ENCODE measurements at regions of chr19 and their contacts with region 1.

Region 1: GRCh38 chr19:48588670-48589399 is 17.7 kb upstream of the SPACA4 start:
- DNase-seq: peak; percentile 91
- CTCF ChIP-seq: peak; percentile 98

Region 2: DNA sequence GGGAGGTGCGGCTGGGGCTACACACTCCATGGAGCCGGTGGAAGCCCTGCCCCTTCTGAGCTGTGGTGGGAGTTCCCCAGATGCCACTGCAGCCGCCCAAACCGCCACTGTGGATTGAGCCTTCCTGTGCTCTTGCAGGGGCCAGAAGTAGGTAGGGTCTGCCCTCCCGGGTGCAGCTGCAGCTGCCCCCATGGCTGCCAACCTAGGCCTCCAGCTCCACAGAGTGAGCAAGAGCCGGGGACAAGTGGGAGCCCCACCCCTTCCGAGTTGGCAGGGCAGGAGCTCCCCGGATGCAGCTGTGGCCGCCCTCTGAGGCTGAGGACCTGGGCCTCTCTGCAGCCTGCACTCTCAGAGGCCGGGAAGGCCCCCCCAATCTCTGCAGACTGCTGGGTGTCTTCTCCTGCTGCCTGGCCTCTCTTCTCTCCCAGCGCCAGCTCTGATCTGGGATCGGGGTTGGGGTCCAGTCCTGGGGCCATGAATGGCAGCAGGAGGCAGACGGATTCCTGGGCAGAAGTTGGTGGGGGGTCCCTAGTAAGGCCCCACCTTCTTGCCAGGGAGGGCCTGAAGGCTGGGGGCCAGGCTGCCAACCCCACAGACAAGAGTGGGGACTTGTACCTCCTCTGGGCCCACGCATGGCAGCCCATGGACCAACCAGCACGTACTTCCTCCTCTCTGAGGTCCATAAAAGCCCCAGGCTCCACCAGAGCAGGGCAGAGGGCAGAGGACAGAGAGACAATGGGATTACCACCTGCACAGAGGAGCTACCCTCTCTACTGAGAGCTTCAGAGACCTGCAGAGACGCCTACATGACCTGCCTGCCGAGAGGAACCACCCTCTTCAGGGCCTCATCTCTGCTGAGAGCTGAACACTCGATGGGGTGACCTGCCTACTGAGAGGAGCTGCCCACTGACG is 1767.1 kb before region 1 on chr19:
- CTCF ChIA-PET with region 1: no interaction called
- POLR2A ChIA-PET with region 1: no interaction called
- DNase-seq: peak; percentile 52
- CTCF ChIP-seq: no peak

Region 3: GRCh38 chr19:48308631-48309586 is 279.9 kb before region 1 on chr19:
- CTCF ChIA-PET with region 1: interaction called, 10 read pairs
- POLR2A ChIA-PET with region 1: no interaction called
- DNase-seq: no peak
- CTCF ChIP-seq: peak; percentile 10

Region 4: GRCh38 chr19:48363810-48364563 is 224.8 kb before region 1 on chr19 and contains the starts of genes SYNGR4 and TMEM143:
- CTCF ChIA-PET with region 1: interaction called, 16 read pairs
- POLR2A ChIA-PET with region 1: no interaction called
- DNase-seq: peak; percentile 99
- CTCF ChIP-seq: no peak

Region 5: DNA sequence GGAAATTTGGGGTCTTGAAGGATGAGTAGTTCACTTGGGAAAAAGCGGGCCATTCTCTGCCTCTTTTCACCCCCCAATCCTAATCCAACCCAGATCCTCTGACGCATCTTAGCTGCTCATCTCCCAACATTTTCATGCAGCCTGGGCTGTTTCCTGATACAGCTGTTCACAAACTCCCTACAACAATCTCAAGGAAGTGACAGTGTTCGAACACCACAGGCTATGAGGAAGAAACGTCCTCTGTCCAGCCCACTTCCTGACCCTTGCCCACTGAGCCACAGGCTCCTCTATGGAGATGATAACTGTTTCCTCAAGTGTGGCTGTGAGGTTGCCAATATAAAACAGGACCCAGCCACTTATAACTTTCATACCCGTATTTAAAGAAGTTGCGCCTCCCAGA is 93.4 kb before region 1 on chr19:
- CTCF ChIA-PET with region 1: interaction called, 68 read pairs
- POLR2A ChIA-PET with region 1: no interaction called
- DNase-seq: no peak
- CTCF ChIP-seq: no peak

Region 6: DNA sequence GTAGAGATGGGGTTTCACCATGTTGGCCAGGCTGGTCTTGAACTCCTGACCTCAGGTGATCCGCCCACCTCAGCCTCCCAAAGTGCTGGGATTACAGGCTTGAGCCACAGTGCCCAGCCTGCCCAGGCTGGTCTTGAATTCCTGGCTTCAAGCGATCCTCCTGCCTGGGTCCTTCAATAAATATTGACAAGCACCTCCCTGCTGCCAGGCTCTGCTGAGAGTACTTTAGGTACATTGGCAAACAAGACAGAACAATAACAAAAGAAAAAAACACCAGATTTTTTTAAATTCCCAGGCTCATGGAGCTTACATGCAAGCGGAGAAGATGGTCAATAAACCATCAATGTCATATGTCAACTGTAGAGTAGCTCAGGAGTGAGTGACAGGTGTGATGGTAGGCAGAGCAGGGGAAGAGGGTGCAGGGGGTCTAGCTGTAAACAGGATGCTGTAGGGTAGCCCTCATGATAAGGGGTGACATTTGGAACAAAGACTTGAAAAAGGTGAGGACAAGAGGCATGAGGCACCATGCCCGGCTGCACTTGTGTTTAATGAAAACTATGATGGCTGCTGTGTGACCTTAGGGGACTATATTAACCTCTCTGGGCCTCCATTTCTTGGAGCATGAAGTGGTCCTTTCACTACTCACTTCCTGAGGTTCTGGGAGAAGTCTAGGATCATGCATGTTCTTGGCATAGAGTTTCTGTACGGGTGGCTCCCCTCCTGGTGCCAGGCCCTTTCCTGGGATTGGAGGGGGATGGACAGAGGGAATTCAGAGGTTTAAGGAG is 17.3 kb before region 1 on chr19:
- CTCF ChIA-PET with region 1: interaction called, 24 read pairs
- POLR2A ChIA-PET with region 1: no interaction called
- DNase-seq: no peak
- CTCF ChIP-seq: no peak

Region 7: DNA sequence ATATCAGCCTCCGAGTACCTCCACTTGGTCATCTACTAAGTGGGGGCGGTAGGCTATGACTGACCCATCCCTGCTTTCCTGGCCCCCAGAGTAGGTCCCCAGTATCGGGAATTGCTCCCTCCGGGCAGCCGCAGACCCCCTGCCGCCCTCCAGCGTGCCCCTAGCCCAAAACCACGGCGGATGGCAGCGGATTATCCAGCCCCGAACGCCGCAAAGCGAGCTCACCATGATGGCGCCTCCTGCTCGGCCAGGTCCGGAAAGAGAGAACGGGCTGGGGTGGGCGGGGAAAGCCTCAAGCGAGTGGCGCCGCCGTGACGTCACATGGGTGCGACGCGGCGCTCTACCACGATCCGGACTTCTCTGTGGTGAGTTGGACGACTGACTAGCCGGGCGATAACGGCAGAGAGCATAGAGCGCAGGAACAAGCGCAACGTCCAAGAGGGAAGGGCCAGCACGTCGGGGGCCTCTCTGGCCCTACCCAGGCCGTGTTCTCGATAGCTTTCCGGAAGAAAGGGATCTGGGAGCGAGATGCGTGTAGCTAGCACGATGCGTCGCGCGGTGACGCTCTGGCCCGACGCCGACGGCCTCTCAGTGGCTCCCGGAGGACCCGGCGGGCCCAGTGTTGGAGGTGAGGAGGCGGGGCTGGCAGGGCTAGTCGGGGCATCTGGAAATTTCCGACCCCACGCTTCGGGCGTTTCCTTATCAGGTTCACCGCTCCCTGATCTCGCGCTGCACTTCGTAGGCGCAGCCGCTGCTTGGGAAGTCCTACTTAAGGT is 30.3 kb after region 1 on chr19 and contains the starts of genes RPL18 and SPHK2:
- CTCF ChIA-PET with region 1: interaction called, 15 read pairs
- POLR2A ChIA-PET with region 1: interaction called, 4 read pairs
- DNase-seq: peak; percentile 98
- CTCF ChIP-seq: peak; percentile 6

Measured in GM10248 (cell line).